Activated CD4-positive, alpha-beta T cell treated with anti-CD3 and anti-CD28 coated beads for 36 hours (primary cell): ENCODE measurements at regions of chr21 and their contacts with region 1.

Region 1: DNA sequence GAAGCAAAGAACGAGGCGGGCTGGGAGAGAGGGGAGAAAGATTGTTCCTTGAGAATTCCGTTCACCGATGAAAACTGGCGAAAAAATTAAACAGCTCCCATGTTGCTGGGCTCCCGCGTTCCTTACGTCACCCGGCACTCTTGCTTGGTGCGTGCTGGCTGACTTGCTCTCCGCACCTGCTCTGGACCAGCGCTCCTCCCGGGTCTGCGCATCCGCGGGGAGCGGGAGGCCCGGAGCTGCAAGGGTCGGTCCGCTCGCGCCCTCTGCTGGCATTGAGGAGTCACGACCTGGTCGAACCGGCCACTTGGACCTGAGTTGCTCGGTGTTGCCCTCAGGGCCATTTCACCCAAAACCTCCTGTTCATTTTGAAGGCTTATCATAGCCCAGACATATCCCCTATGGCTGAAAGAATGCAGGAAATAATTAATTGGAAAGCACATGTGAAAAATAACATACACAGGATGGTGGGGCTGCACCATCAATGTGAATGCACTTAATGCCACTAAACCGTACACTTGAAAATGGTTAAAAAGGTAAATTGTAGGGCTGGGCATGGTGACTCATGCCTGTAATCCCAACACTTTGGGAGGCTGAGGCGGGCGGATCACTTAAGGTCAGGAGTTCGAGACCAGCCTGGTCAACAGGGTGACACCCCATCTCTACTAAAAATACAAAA is 98.9 kb upstream of the BACE2 start:
- DNase-seq: peak; percentile 89
- ATAC-seq: peak; percentile 78
- H3K4me3 Mint-ChIP-seq: peak overlapping the region; percentile 9
- H3K27ac Mint-ChIP-seq: no peak overlapping the region
- H3K4me1 Mint-ChIP-seq: peaks cover 9% of the 10 kb centered on the region
- H3K27me3 Mint-ChIP-seq: peaks cover 24% of the 10 kb centered on the region

Region 2: DNA sequence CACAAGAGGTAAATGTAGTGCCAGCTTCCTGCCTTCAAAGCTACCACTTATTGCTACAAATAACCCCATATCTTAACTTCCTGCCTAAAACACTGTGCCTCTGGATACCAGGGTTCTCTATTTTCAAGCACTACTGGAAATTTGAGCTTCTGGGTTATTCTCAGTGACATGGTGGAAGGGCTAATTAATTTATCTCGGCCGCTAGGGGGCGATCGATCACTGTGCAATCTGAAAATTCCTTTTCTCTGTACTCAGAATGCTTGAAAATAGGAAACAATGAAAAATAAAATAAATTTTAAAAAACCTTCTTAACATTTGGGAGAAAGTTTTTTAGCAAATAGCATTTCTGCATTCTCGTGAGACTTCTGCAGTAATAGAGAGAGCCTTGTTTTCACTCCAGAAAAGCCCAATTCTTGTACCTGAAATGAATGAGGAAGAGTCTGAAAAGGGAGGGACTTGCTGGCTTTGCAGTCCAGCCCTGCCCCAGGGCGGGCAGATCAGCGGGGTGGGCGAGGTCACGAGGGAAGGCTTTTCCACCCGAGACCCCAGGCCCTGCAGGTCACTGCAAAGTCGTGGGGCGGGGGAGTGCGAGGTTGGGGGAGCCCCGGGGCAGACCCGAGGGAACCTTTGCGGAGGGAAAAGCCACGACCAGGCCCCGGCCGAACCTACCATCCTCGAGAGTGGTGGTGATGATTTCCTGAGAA is 925.1 kb before region 1 on chr21:
- CTCF ChIA-PET with region 1: interaction called, 3 read pairs
- POLR2A ChIA-PET with region 1: no interaction called
- intact Hi-C with region 1: loop called (anchors 1 to 2 kb)
- DNase-seq: peak; percentile 76
- ATAC-seq: no peak
- H3K4me3 Mint-ChIP-seq: no peak overlapping the region
- H3K27ac Mint-ChIP-seq: no peak overlapping the region
- H3K4me1 Mint-ChIP-seq: no peaks in the 10 kb centered on the region
- H3K27me3 Mint-ChIP-seq: no peaks in the 10 kb centered on the region

Region 3: DNA sequence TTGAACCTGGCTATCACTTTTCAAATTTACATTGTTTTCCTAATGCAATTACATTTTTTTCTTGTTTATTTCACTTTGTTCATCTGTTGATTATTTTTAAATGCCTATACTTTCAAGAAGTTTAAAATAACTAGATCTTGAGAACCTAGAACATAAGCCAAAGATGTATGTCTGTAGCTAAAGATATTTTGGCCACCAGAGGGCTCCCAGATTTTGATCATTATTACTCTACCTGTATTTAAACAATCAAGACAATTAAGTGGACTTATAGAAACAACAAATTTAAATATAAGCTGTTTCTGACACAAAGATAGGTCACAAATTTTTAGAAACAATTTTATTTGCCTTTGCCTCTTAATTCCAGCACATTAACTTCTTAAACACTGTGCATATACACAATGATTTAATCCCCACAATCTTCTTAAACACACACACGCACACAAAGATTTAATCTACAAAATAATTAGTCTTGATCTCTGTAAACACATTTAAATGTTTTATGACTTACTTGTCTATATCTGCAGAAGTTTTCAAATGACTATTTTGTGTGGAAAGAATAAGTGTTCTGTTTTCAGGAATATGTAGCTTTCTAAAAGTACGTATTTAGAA is 602.1 kb before region 1 on chr21:
- CTCF ChIA-PET with region 1: no interaction called
- POLR2A ChIA-PET with region 1: no interaction called
- intact Hi-C with region 1: loop called in 1 of 2 experiments (anchors 2 kb)
- DNase-seq: no peak
- ATAC-seq: no peak
- H3K4me3 Mint-ChIP-seq: no peak overlapping the region
- H3K27ac Mint-ChIP-seq: no peak overlapping the region
- H3K4me1 Mint-ChIP-seq: no peaks in the 10 kb centered on the region
- H3K27me3 Mint-ChIP-seq: peaks cover 4% of the 10 kb centered on the region